Activated T-helper 2 cell treated with anti-CD3 and anti-CD28 coated beads, Interferon-gamma antibody, Interleukin-2, Interleukin-4, amounts not matched to agents 10 μg/mL and 5 μg/mL and 100 μg/mL, durations not matched to agents 14 hours and 24 hours and 36 hours (primary cell): ENCODE measurements at regions of chr20 and their contacts with region 1.

Region 1: DNA sequence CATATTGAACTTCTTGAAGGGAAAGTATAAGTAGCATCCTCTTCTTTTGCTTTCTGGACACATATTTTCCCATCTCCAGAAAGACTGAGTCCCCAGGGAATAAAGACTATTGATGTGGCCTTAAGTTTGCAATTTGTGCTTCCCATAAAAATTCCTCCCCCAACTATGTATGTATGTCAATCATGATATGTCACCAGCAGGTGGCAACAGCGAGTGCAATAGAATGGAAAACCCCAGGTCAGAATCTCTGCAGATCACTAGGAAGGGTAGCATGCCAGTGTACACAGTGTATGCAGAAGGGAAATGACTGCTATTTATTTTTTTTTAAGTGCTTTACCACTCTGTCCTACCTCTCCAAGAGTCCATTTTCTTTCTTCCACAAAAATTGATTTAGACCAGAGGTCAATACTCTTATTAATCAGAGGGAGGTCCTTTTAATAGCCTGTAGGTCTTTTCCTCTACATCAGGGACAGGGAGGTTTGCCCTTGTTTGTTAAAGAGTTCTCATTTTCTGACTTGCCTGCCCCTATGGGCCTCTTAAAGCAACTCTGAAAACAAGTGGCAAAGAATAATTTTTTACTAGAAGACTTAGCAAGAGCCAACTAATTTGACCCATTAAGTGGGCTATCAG is 61.4 kb downstream of the BMP2 start:
- DNase-seq: peak; percentile 8
- H3K4me3 Mint-ChIP-seq: no peak overlapping the region
- H3K27ac Mint-ChIP-seq: no peak overlapping the region
- H3K4me1 Mint-ChIP-seq: no peaks in the 10 kb centered on the region
- H3K27me3 Mint-ChIP-seq: no peaks in the 10 kb centered on the region

Region 2: GRCh38 chr20:7859356-7859802 is 1030.5 kb after region 1 on chr20:
- intact Hi-C with region 1: loop called (anchors 2 kb)
- DNase-seq: no peak
- H3K4me3 Mint-ChIP-seq: no peak overlapping the region
- H3K27ac Mint-ChIP-seq: no peak overlapping the region
- H3K4me1 Mint-ChIP-seq: peaks cover 2% of the 10 kb centered on the region
- H3K27me3 Mint-ChIP-seq: no peaks in the 10 kb centered on the region